ENCODE measurements at regions of chr5 and their contacts with region 1.

Region 1: GRCh38 chr5:39283231-39283818 is 64.0 kb upstream of the FYB1 start:
- DNase-seq: peak; percentile 60
- H3K4me3 Mint-ChIP-seq: peak overlapping the region; percentile 4
- H3K27ac Mint-ChIP-seq: peak overlapping the region; percentile 68
- H3K4me1 Mint-ChIP-seq: peaks cover 31% of the 10 kb centered on the region
- H3K27me3 Mint-ChIP-seq: peaks cover 3% of the 10 kb centered on the region

Region 2: DNA sequence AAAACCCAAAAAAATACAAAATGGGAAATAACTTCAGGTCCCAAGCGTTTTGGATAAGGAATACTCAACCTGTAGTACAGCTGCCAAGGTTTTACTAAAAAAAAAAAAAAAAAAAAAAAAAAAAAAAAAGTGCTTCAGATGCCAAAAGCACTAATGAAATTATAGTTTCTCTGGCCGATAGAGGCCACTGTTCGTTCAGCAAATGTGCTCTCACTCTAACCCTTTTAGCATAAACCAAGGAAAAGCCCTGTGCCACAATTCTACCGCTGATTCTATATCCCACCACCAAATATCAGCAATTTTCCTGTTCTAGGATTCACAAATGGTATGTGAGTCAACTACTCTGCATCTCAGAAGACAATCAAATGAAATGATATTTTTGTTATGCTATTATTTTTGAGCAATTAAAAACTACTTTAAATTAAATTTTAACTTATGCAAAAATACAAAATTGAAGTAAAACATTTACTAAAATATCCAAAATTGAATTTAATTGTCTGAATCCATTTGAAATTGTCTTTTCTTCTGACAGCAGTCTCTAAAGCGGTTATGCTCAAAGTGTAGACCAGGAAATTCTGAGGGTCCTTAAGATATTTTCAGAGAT is 288.9 kb before region 1 on chr5:
- CTCF ChIA-PET with region 1: no interaction called
- POLR2A ChIA-PET with region 1: no interaction called
- intact Hi-C with region 1: loop called (anchors 5 kb)
- DNase-seq: peak; percentile 28
- H3K4me3 Mint-ChIP-seq: no peak overlapping the region
- H3K27ac Mint-ChIP-seq: no peak overlapping the region
- H3K4me1 Mint-ChIP-seq: peaks cover 10% of the 10 kb centered on the region
- H3K27me3 Mint-ChIP-seq: no peaks in the 10 kb centered on the region

Region 3: GRCh38 chr5:39148983-39149534 is 134.3 kb before region 1 on chr5:
- CTCF ChIA-PET with region 1: interaction called, 16 read pairs
- POLR2A ChIA-PET with region 1: no interaction called
- intact Hi-C with region 1: loop called (anchors 1 kb)
- DNase-seq: no peak
- H3K4me3 Mint-ChIP-seq: no peak overlapping the region
- H3K27ac Mint-ChIP-seq: peak overlapping the region; percentile 90
- H3K4me1 Mint-ChIP-seq: peaks cover 61% of the 10 kb centered on the region
- H3K27me3 Mint-ChIP-seq: no peaks in the 10 kb centered on the region

Region 4: DNA sequence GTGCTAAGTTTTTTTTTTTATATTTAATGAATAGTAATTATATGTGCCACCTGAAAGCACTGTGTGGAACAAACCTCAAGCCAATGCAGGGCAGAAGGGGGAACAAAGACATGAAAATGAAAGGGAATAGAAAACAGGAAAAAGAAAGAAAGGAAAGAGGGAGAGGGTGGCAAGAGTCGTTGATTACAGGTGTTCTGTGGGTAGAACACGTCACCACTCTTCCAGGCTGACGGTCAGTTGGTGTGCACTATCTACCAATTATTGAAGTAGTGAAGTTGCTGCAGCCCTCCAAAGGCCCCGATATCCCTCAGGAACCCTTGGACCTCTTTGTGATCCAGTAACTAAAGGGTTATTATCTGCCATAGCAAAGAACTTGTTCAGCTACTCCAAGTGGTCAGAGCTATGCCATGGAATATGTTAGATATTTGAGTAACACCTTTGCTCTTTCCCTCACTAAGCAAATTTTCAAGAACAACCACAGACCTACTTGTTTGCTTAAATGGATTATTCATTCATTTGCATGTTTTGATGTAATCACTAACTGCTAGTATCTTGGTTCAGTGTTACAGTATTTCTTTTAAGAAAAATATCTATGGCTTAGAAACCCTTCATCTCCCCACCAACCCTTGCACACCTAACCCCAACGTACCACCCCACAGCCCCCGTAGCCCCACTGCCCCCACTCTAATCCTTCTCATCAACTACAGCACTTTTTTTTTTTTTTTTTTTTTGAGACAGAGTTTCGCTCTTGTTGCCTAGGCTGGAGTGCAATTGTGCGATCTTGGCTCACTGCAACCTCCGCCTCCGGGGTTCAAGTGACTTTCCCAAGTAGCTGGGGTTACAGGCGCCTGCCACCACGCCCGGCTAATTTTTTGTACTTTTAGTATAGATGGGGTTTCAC is 95.2 kb before region 1 on chr5:
- CTCF ChIA-PET with region 1: interaction called, 10 read pairs
- POLR2A ChIA-PET with region 1: interaction called, 4 read pairs
- intact Hi-C with region 1: no loop called
- DNase-seq: no peak
- H3K4me3 Mint-ChIP-seq: peak overlapping the region; percentile 69
- H3K27ac Mint-ChIP-seq: peak overlapping the region; percentile 92
- H3K4me1 Mint-ChIP-seq: peaks cover 79% of the 10 kb centered on the region
- H3K27me3 Mint-ChIP-seq: no peaks in the 10 kb centered on the region

Region 5: DNA sequence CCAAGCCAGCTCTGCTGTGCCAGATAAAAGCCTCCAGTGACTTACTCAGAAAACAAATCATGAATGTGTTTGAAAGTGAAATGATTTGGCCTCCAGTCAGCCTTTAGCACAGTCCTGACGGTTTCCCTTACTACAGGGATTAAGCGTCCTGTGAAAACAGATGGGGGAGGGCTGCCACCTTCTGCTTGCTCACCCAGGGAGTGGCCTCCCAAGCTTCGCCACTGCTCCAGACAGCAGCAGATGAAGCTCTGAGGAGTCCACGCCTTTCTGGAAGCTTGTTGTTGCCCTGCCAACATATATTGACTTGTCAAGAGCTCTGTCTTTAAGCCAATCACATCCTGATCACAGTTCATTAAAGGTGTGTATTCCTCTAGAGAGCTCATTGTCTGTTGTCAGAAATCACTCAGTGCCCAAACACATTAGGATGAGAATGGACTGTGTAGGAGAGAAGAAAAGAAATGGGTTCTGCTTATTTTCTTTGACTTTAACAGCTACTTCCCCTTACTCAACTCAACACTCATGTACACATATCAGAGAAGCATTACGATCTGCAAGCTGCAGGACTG is 59.0 kb before region 1 on chr5:
- CTCF ChIA-PET with region 1: interaction called, 195 read pairs
- POLR2A ChIA-PET with region 1: no interaction called
- intact Hi-C with region 1: no loop called
- DNase-seq: peak; percentile 36
- H3K4me3 Mint-ChIP-seq: no peak overlapping the region
- H3K27ac Mint-ChIP-seq: no peak overlapping the region
- H3K4me1 Mint-ChIP-seq: peaks cover 21% of the 10 kb centered on the region
- H3K27me3 Mint-ChIP-seq: no peaks in the 10 kb centered on the region

Region 6: DNA sequence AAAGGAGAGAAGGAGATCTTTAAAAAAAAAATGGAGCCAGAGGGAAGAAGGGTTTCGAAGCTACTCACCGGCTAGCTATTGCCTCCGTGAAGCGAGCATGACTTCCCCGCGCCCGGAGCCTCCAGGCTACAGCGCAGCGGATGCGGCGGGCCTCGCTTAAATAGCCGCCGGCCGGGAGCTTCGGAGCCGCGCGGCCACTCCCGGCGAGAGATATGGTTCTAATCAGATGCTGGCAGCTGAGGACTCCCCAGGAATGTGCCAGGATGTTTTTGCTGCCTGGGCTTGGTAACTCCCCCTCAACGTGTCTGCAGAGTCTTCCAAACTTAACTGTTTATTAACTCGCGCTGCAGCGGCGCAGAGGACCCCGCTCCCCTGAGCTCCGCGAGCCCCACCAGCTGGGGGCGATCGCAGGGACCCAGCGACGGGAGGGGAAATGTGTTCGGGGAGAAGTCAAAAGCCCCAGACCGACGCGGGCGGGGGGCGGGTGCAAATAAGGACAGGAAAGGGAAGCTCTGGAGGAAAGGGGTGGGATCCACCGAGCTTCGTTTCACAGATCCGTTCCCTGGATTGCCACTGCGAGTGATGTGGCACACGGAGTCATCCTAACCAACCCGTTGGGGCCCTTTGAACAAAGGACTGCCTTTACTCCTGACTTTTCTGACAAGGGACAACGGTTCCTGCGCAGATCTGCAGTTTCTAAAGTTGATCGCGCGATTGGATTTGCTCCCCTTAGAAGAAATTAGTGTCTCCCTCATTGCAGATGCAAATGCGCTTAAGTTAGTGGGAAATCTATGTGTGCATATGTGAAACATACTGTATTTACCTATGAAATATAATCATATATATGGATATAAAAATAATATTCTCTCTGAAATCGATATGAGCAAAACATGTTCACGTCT is 141.7 kb after region 1 on chr5 and contains the start of gene DAB2:
- CTCF ChIA-PET with region 1: no interaction called
- POLR2A ChIA-PET with region 1: no interaction called
- intact Hi-C with region 1: no loop called
- DNase-seq: peak; percentile 50
- H3K4me3 Mint-ChIP-seq: peak within 1 kb of the TSS; percentile 72
- H3K27ac Mint-ChIP-seq: no peak within 1 kb of the TSS
- H3K4me1 Mint-ChIP-seq: peaks cover 4% of the 10 kb centered on the region
- H3K27me3 Mint-ChIP-seq: peaks cover 35% of the 10 kb centered on the region
- total RNA-seq, gene DAB2: not detected

Measured in activated CD4-positive, alpha-beta memory T cell treated with anti-CD3 and anti-CD28 coated beads for 36 hours (primary cell).